Psoas muscle (tissue), 8 donors: ENCODE measurements at regions of chr1 and their contacts with region 1.

Region 1: DNA sequence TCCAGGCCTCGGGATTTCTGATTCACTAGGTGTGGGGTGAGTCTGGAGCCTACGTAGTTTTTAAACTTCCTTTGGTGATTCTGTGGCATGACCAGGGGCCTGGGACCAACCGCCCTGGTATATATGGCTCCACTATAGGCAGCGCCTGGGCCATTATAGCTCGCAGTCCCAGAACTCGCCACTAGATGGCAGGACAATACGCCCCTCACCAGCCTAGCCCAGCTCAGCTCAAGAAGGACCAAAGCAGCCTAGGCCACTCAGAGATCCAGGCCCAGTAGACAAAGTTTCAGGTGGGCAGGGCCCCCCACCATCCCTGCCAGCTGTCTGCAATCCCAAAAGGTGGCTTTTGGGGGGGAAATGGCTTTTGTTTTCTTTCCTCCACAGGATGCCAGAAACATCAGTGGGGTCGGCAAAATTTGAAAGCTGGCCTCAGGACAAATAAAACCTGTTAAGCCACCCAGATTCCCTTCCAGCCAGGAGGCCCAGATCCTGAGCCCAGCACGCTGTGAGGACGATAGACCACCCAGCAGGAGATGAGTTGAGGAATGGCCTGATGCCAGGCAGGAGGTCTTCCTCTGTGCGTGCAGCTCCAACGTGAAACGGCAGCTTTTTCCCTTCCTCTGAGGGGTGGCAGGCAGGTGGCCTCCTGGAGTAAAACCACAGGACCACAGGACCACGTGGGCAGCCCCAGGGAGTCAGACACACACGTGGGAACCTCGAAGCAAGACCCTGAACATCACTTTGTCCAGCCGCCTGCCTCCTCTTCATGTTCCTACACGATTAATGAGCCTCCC is 24.8 kb upstream of the TMEM51 start:
- DNase-seq: peak; percentile 53 to 67
- ATAC-seq: peak; percentile 49 to 71 (median 54)
- H3K4me3 ChIP-seq: no peak overlapping the region
- H3K27ac ChIP-seq: no peak overlapping the region
- H3K4me1 ChIP-seq: no peaks in the 10 kb centered on the region
- H3K27me3 ChIP-seq: peaks cover 0 to 4% (median 0%) of the 10 kb centered on the region in 3 donors
- CTCF ChIP-seq: peak; percentile 61

Region 2: GRCh38 chr1:15272009-15272788 is 143.5 kb after region 1 on chr1:
- intact Hi-C with region 1: loop called in 1 of 2 experiments (anchors 10 kb)
- DNase-seq: peak in 1 of 2 donors; percentile 33
- ATAC-seq: peak in 3 of 4 donors; percentile 45 to 60 (median 58)
- H3K4me3 ChIP-seq: no peak overlapping the region
- H3K27ac ChIP-seq: no peak overlapping the region
- H3K4me1 ChIP-seq: no peaks in the 10 kb centered on the region
- H3K27me3 ChIP-seq: peaks cover 0 to 33% (median 0%) of the 10 kb centered on the region in 3 donors
- CTCF ChIP-seq: peak; percentile 56

Region 3: DNA sequence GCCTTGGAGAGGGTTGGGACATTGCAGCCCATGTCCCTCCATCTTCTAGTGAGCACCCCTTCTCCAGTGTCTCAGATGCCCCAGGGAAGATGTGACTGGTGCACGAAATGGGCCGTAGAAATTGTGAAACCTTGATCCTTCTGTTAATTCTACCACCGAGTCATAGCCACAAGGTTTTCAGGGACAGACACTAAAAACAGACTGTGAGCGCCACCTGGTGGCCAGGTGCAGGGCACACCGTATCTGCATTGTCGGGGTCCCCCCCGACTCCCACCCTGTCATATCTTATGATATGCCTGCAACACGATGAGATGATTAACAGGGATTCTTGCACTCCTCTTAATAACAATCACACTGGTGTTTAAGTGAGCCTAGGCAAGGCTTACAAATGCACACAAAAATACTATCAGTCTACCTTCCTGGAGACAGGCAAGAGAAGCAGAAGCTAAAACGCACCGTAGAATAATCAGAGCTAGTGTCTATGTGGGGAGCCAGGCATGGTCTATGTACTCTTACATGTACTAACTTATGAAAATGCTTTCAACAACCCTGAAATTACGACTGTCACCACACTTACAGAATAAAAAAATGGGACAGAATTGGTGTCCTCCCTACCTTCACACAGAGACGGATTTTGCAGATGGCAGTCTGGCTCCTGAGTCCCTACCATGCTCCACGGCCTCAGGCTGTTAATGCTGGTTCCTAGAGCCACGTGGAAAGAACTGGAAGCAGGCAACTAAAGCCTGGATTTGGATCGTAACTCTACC is 176.2 kb after region 1 on chr1:
- intact Hi-C with region 1: loop called in 1 of 2 experiments (anchors 1 kb)
- DNase-seq: peak; percentile 37 to 64
- ATAC-seq: peak in 1 of 4 donors; percentile 38
- H3K4me3 ChIP-seq: no peak overlapping the region
- H3K27ac ChIP-seq: no peak overlapping the region
- H3K4me1 ChIP-seq: no peaks in the 10 kb centered on the region
- H3K27me3 ChIP-seq: no peaks in the 10 kb centered on the region
- CTCF ChIP-seq: peak; percentile 72

Region 4: DNA sequence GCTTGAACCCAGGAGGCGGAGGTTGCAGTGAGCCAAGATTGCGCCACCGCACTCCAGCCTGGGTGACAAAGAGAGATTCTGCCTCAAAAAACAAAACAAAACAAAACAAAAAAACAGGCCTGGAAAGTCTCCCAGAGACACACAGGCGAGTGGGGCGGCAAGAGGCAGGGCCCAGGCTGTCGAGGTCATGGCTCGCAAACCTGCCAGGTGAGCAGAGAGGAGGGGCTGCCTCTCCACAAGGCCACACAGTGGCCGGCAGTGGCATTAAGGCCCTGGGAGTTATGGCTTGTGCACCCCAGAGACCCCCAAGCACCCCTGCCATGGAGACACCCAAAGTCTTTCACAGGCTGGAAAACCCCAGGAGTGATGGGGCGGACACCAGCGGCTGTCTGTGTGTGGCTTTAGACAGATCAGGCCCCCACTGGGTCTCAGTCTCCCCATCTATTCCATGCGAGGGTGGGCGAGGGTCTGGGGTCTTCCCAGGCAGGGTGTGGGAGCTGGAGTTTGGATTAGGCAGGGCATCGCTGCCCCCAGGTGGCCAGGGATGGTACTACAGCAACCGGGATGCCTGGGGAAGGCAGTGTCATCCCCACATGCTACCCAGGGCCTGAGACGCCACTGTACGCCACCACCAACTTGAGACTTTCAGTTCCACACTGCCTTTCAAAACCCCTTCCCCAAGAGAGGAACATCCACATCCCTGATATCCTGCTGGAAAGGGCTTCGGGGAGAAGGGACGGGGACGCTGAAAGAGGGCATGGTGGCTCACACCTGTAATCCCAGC is 302.3 kb after region 1 on chr1:
- intact Hi-C with region 1: loop called in 1 of 2 experiments (anchors 10 kb)
- DNase-seq: peak; percentile 63 to 82
- ATAC-seq: peak; percentile 75 to 80 (median 78)
- H3K4me3 ChIP-seq: no peak overlapping the region
- H3K27ac ChIP-seq: no peak overlapping the region
- H3K4me1 ChIP-seq: no peaks in the 10 kb centered on the region
- H3K27me3 ChIP-seq: no peaks in the 10 kb centered on the region
- CTCF ChIP-seq: peak; percentile 97